Breast epithelium (tissue), 4 donors: ENCODE measurements at regions of chr1 and their contacts with region 1.

Region 1: DNA sequence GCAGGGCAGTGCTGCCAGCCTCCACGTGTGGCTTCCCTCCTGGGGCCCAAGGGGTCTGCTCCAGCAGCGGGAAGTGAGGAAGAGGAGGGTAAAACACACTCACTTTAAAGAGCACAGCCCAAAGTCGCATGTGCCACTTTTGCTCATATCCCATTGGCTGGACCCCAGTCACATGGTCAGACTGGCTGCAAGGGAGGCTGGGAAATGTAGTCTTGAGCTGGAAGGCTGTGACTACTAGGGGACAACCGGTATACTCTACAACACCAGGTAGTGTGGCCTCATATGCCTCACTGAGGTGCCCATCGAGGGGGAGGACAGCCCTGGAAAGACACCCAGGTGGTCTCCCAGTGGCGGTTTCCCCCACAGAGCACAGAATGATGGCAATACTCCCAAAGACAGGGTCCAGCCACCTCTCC is 45.2 kb downstream of the CAMK2N1 start:
- DNase-seq: peak in 1 of 2 donors; percentile 49
- H3K4me3 ChIP-seq: no peak overlapping the region
- H3K27ac ChIP-seq: no peak overlapping the region
- H3K4me1 ChIP-seq: no peaks in the 10 kb centered on the region
- H3K27me3 ChIP-seq: no peaks in the 10 kb centered on the region
- CTCF ChIP-seq: no peak
- POLR2A ChIP-seq: no peak

Region 2: GRCh38 chr1:18529714-18530113 is 1911.1 kb before region 1 on chr1:
- intact Hi-C with region 1: loop called (anchors 5 kb)
- DNase-seq: no peak
- H3K4me3 ChIP-seq: no peak overlapping the region
- H3K27ac ChIP-seq: no peak overlapping the region
- H3K4me1 ChIP-seq: no peaks in the 10 kb centered on the region
- H3K27me3 ChIP-seq: peaks cover 0 to 9% of the 10 kb centered on the region in 2 donors
- CTCF ChIP-seq: no peak
- POLR2A ChIP-seq: no peak

Region 3: GRCh38 chr1:20185834-20186782 is 254.7 kb before region 1 on chr1 and contains the starts of genes PLA2G2C and UBXN10:
- intact Hi-C with region 1: no loop called
- DNase-seq: peak; percentile 45 to 67
- H3K4me3 ChIP-seq: peak within 1 kb of the TSS; percentile 40 to 72 (median 60)
- H3K27ac ChIP-seq: peak within 1 kb of the TSS; percentile 66 to 85
- H3K4me1 ChIP-seq: peaks cover 0 to 8% of the 10 kb centered on the region in 2 donors
- H3K27me3 ChIP-seq: no peaks in the 10 kb centered on the region
- CTCF ChIP-seq: no peak
- POLR2A ChIP-seq: no peak
- total RNA-seq, gene PLA2G2C: 0.33 TPM in 1 of 3 donors, not detected in the others
- total RNA-seq, gene UBXN10: 1.3 to 6.6 (median 4.9) TPM

Region 4: DNA sequence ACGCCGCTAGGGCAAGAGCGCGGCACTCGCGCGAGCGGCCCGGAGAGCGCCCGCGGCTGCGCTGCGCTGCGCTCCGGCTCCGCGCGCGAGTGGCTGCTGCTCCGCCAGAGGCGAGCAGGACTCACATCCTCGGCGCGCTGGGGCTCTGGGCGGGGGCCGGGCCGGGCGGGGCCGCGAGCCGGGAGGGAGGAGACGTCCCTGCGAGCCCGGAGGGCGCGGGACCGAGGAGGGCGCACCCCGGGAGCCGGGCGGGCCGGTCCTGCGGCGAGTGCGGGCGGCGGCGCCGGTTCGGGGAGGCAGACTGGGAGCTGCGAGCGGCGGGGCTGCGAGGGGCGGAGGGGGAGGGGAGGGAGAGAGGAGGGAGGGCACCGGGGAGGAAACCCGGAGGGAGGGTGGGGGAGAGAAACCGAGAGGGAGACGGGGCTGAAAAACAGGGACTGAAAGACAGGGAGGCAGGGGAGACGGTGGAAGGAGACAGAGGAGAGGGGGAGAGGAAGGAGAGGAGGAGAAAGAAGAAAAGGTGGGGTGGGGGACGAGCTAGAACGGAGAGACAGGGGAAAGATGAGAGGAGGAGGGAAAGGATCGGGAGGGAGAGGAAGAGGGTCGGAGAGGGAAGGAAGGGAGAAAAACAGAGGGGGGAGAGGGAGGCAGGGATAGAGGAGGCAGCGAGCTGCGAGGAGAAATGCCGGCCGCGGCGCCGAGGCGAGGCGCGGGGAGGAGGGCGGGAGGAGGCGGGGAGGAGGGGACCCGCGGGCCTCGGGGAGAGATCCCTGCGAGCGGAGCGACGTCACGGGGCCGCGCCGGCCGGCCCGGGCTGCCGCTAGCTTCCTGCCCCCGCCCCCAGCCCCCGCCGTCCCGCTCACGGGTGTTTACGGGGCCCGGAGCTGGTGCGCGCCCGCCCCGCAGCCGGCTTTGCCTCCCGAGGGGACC is 45.0 kb after region 1 on chr1 and contains the start of gene CAMK2N1:
- intact Hi-C with region 1: no loop called
- DNase-seq: peak; percentile 59 to 73
- H3K4me3 ChIP-seq: peak within 1 kb of the TSS; percentile 69 to 88 (median 71)
- H3K27ac ChIP-seq: peak within 1 kb of the TSS; percentile 94 to 95
- H3K4me1 ChIP-seq: peaks cover 0 to 12% of the 10 kb centered on the region in 2 donors
- H3K27me3 ChIP-seq: no peaks in the 10 kb centered on the region
- CTCF ChIP-seq: no peak
- POLR2A ChIP-seq: peak; percentile 17
- total RNA-seq, gene CAMK2N1: 5.6 to 26.9 (median 17.0) TPM